Mammary epithelial cell (primary cell): ENCODE measurements at regions of chr7 and their contacts with region 1.

Region 1: GRCh38 chr7:16918288-16918895 is 36.6 kb upstream of the AGR3 start:
- DNase-seq: peak; percentile 25
- H3K4me3 ChIP-seq: no peak overlapping the region
- H3K27ac ChIP-seq: no peak overlapping the region
- H3K4me1 ChIP-seq: peaks cover 36% of the 10 kb centered on the region
- H3K27me3 ChIP-seq: no peaks in the 10 kb centered on the region
- CTCF ChIP-seq: peak; percentile 51 to 63

Region 2: DNA sequence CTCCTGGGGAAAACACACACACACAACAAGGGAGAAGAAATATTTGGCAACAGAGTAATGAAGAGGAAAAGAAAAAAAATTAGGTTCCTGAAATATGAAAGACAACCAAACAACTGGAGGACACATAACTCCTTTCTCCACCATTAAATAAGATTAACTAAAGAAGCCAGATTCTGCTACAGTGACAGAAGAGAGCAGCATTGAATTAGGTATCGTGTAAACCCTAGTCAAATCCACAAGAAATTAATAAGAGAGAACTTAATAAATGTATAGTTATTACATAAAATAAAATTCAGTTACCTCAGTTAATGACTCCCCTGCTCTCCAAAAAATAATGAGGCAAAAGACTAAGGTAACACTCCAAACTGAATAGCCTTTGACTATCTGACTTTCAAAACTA is 803.8 kb before region 1 on chr7:
- CTCF ChIA-PET with region 1: no interaction called
- dilution Hi-C with region 1: no loop called
- in situ Hi-C with region 1: no loop called
- intact Hi-C with region 1: loop called (anchors 10 kb)
- DNase-seq: peak; percentile 18
- H3K4me3 ChIP-seq: no peak overlapping the region
- H3K27ac ChIP-seq: no peak overlapping the region
- H3K4me1 ChIP-seq: no peaks in the 10 kb centered on the region
- H3K27me3 ChIP-seq: no peaks in the 10 kb centered on the region
- CTCF ChIP-seq: peak; percentile 44 to 57

Region 3: DNA sequence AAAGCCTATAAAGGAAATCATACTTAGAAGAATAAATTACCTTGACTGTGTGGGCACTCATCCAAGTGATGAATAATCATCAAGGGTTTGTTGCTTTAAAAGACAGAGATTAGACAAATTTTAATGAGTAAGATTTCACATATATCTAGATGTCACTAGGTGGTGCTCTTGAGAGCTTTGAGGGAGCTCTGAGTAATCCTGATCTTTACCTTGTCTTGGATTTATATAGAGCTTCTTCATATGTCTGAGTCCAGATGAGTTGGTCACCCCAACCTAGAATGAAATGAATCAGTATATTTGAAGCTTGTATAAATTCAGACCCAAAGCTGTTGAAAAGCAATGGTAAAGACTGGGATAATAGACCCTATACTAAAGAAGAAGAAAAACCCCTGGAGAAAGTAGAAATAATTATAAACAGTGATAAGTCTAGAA is 117.3 kb before region 1 on chr7:
- CTCF ChIA-PET with region 1: interaction called, 4 read pairs
- dilution Hi-C with region 1: no loop called
- in situ Hi-C with region 1: loop called in 1 of 2 experiments (anchors 10 kb)
- intact Hi-C with region 1: loop called (anchors 1 kb)
- DNase-seq: peak; percentile 90
- H3K4me3 ChIP-seq: no peak overlapping the region
- H3K27ac ChIP-seq: no peak overlapping the region
- H3K4me1 ChIP-seq: peaks cover 22% of the 10 kb centered on the region
- H3K27me3 ChIP-seq: no peaks in the 10 kb centered on the region
- CTCF ChIP-seq: peak; percentile 56 to 62

Region 4: DNA sequence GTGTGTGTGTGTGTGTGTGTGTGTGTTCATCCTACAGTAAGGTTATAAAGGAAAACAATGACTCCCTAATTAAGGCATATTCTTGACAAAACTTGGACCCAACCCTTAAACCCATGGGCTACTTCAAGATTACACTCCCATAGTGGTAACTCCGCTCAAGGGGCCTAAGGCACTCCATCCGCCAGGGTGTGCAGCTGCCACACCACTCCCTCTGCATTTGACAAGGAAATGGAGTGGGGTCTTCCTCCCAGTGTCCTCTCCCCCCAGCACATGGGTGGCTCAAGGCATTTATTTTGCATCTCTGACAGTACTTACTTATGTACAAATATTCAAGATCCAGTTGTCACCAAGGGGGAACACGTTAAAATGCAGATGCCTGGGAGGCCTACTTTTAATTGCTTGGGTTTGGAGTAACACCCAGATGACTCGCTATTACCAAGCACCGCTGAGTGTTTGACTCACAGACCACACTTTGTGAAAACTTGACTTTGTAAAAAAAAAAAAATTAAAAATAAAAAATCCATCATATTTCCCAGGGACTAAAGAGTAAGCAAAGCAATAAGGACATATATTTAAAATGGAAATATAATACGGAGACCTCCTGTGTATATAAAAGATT is 16.4 kb after region 1 on chr7:
- CTCF ChIA-PET with region 1: interaction called, 12 read pairs
- dilution Hi-C with region 1: no loop called
- in situ Hi-C with region 1: no loop called
- intact Hi-C with region 1: no loop called
- DNase-seq: peak; percentile 72
- H3K4me3 ChIP-seq: no peak overlapping the region
- H3K27ac ChIP-seq: peak overlapping the region; percentile 18
- H3K4me1 ChIP-seq: peaks cover 15% of the 10 kb centered on the region
- H3K27me3 ChIP-seq: no peaks in the 10 kb centered on the region
- CTCF ChIP-seq: no peak